ENCODE measurements at regions of chr21 and their contacts with region 1.

Region 1: GRCh38 chr21:32412162-32413014 is at the start of gene EVA1C:
- DNase-seq: peak; percentile 61
- H3K4me3 Mint-ChIP-seq: peak within 1 kb of the TSS; percentile 92
- H3K27ac Mint-ChIP-seq: peak within 1 kb of the TSS; percentile 90
- H3K4me1 Mint-ChIP-seq: peaks cover 33% of the 10 kb centered on the region
- H3K27me3 Mint-ChIP-seq: no peaks in the 10 kb centered on the region
- total RNA-seq, gene EVA1C: 5.3 to 5.9 TPM

Region 2: DNA sequence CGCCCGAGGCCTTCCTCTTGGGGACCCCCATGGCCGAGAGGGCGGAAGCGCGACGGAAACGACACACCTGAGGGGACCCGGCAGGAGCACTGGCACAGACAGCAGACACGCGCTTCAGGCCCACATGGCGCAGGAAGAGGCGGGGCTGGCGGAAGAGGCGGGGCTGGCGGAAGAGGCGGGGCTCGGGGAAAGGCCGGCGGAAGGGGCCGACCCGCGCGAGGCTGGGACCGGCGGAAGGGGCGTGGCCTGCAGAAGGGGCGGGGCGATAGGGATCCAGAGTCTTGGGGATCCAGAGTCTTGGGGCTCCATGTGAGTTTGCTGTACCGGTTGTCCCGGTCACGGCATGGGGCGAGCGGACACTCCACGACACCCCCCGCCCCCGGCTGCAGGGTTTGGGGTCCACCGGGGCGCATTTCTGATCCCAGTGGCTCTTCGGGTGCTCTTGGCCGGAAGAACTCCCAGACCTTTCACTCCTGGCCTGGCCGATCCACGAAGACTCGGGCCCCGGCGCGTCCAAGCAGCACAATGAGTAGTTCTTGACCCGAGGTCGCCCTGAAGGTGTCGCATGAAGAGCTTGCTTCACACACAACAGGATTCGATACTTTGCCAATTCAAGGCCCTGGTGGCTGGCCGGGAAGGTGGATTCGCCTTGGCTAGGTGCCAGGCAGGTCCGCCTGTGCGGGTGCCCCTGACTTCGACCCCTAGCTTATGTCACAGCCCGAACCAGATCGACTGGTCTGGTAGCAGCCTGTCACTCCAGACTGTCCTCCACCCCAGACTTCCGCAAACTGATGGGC is 19.3 kb before region 1 on chr21 and contains the start of gene URB1:
- CTCF ChIA-PET with region 1: no interaction called
- intact Hi-C with region 1: loop called (anchors 1 kb)
- DNase-seq: peak; percentile 94
- H3K4me3 Mint-ChIP-seq: peak within 1 kb of the TSS; percentile 83
- H3K27ac Mint-ChIP-seq: peak within 1 kb of the TSS; percentile 77
- H3K4me1 Mint-ChIP-seq: peaks cover 46% of the 10 kb centered on the region
- H3K27me3 Mint-ChIP-seq: no peaks in the 10 kb centered on the region
- total RNA-seq, gene URB1: 20.8 to 21.4 TPM

Region 3: DNA sequence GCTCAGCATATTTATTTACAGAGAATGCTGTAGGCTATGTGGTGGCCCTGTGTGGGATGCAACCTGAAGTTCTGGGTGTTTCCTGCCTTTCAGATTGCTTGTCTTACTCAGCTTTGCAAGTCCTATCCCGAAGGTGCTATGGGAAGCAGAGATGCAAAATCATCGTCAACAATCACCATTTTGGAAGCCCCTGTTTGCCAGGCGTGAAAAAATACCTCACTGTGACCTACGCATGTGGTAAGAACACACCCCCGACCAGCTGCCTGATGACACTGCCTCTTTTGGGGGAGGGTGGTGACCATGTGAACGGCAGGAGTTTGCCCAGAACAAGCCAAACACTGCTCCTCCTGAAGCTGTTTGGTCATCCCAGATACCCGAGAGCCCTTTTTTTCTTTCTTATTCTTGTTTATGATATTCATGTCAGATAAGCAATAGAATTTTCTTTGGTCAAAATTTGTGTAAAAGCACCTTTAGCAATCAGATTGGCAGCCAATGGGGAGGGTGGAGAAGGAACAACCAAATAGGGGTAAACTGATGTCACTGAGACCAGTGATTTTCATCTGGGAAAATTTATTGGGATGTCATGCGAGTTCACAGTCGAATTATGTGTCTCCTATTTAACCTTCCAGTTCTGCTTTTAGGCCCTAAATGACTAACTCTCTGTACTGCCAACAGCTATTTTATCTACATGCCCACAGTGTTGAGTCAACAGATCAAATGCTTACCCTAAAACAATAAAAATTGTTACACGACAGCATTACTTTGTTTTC is 82.7 kb after region 1 on chr21:
- CTCF ChIA-PET with region 1: no interaction called
- intact Hi-C with region 1: loop called (anchors 2 kb)
- DNase-seq: no peak
- H3K4me3 Mint-ChIP-seq: no peak overlapping the region
- H3K27ac Mint-ChIP-seq: no peak overlapping the region
- H3K4me1 Mint-ChIP-seq: peaks cover 2% of the 10 kb centered on the region
- H3K27me3 Mint-ChIP-seq: no peaks in the 10 kb centered on the region

Region 4: DNA sequence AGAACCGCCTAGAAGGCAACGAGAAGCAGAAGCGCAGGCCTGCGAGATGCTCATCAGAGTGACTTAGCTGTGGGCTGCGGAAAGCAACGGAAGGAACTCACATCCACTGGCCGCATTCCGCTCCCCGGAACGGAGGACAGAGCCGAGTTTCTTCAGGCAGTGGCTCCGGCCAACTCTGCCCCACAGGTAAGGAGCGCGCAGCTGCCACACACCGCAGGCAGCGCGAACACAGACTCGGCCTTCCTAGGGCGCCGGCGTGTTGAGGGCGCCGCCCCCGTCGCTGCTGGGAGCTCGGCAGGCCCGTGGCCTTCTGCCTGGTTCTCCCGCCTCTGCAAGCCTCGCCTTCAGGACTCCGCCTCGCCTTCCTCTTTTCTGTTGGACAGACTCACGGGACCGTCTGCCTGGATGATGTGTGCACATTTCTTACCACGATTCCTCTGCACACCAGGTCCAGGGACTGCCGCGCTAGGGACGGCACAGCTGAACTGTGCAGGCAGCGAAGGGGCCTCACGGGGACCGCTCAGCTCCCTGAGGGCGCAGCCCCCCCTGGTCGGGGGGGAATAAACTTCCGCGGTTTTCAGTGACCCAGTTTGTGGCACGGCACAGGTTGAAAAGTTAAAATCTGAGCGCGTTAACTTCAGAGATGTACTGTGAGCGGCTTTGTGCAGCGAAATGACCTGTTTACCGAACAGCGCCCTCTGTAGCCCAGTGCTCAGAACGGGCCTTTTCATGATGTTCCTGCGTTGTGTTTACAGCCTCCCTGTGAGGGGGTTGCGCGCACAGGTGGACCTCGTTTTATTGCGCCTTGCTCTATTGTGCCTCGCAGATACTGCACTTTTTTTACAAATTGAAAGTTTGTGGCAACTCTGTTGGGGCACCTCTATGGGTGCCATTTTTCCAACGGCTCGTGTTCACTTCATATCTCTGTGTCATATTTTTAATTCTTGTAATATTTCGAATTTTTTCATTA is 157.2 kb after region 1 on chr21:
- CTCF ChIA-PET with region 1: interaction called, 18 read pairs
- intact Hi-C with region 1: loop called (anchors 1 kb)
- DNase-seq: peak; percentile 88
- H3K4me3 Mint-ChIP-seq: peak overlapping the region; percentile 70
- H3K27ac Mint-ChIP-seq: no peak overlapping the region
- H3K4me1 Mint-ChIP-seq: peaks cover 12% of the 10 kb centered on the region
- H3K27me3 Mint-ChIP-seq: no peaks in the 10 kb centered on the region

Region 5: GRCh38 chr21:32612075-32612998 is 199.9 kb after region 1 on chr21 and contains the start of gene CFAP298:
- CTCF ChIA-PET with region 1: interaction called, 3 read pairs
- intact Hi-C with region 1: loop called (anchors 1 kb)
- DNase-seq: peak; percentile 88
- H3K4me3 Mint-ChIP-seq: peak within 1 kb of the TSS; percentile 98
- H3K27ac Mint-ChIP-seq: peak within 1 kb of the TSS; percentile 83
- H3K4me1 Mint-ChIP-seq: peaks cover 13% of the 10 kb centered on the region
- H3K27me3 Mint-ChIP-seq: no peaks in the 10 kb centered on the region
- total RNA-seq, gene CFAP298: 33.3 to 35.6 TPM

Region 6: GRCh38 chr21:32727687-32728455 is 315.5 kb after region 1 on chr21 and contains the start of gene SYNJ1:
- CTCF ChIA-PET with region 1: no interaction called
- intact Hi-C with region 1: loop called (anchors 5 kb)
- DNase-seq: peak; percentile 94
- H3K4me3 Mint-ChIP-seq: peak within 1 kb of the TSS; percentile 96
- H3K27ac Mint-ChIP-seq: peak within 1 kb of the TSS; percentile 88
- H3K4me1 Mint-ChIP-seq: peaks cover 45% of the 10 kb centered on the region
- H3K27me3 Mint-ChIP-seq: no peaks in the 10 kb centered on the region
- total RNA-seq, gene SYNJ1: 7.4 to 10.9 TPM

Measured in activated naive CD4-positive, alpha-beta T cell treated with anti-CD3 and anti-CD28 coated beads for 36 hours (primary cell).